Gastrocnemius medialis (tissue), 4 donors: ENCODE measurements at regions of chr7 and their contacts with region 1.

Region 1: DNA sequence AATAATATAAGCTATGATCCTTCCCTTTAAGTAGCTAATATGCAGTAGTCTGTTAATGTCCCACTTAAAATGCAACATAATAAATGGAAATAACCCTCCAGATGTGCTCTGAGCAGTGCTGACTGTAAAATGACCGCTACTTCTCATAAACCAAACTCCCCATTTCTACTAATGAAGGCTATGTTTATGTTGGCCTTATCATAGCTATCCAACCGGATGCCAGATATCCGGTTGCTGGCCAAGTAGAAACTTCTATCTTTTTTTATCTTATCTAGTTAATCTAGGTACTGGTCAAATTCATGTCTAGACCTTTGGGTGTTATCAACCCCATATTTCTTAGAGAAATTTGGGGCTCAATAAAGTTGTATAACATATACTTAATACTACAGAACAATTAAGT is 56.6 kb downstream of the CHRM2 start:
- DNase-seq: no peak
- ATAC-seq: no peak
- H3K4me3 ChIP-seq: no peak overlapping the region
- H3K27ac ChIP-seq: no peak overlapping the region
- H3K4me1 ChIP-seq: no peaks in the 10 kb centered on the region
- H3K27me3 ChIP-seq: no peaks in the 10 kb centered on the region
- CTCF ChIP-seq: no peak
- POLR2A ChIP-seq: no peak

Region 2: DNA sequence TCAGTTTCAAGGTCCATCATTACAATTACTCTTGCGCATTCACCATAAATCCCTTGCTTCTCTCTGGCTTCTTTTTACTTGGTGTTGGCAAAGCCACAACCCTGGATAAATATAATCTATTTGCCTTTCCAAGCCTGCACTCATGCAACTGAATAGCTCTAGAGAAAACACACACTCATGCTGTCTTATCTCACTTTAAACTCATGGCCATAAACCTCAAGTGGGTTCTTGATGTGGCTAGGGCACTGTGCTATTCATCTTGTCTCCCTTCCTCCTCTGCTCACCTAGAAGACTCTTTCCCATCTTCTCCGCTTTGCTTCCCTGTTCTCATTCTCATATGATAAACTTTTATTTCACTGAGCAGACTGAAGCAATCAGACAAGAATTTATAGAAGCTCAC is 782.5 kb before region 1 on chr7:
- in situ Hi-C with region 1: no loop called
- intact Hi-C with region 1: no loop called
- DNase-seq: no peak
- ATAC-seq: no peak
- H3K4me3 ChIP-seq: no peak overlapping the region
- H3K27ac ChIP-seq: no peak overlapping the region
- H3K4me1 ChIP-seq: no peaks in the 10 kb centered on the region
- H3K27me3 ChIP-seq: no peaks in the 10 kb centered on the region
- CTCF ChIP-seq: no peak
- POLR2A ChIP-seq: no peak

Region 3: GRCh38 chr7:136412952-136413351 is 512.1 kb before region 1 on chr7:
- in situ Hi-C with region 1: no loop called
- intact Hi-C with region 1: no loop called
- DNase-seq: no peak
- ATAC-seq: no peak
- H3K4me3 ChIP-seq: no peak overlapping the region
- H3K27ac ChIP-seq: no peak overlapping the region
- H3K4me1 ChIP-seq: no peaks in the 10 kb centered on the region
- H3K27me3 ChIP-seq: no peaks in the 10 kb centered on the region
- CTCF ChIP-seq: no peak
- POLR2A ChIP-seq: no peak

Region 4: GRCh38 chr7:136845899-136846465 is 79.1 kb before region 1 on chr7:
- in situ Hi-C with region 1: loop called in 1 of 4 experiments (anchors 25 kb)
- intact Hi-C with region 1: no loop called
- DNase-seq: no peak
- ATAC-seq: no peak
- H3K4me3 ChIP-seq: no peak overlapping the region
- H3K27ac ChIP-seq: no peak overlapping the region
- H3K4me1 ChIP-seq: no peaks in the 10 kb centered on the region
- H3K27me3 ChIP-seq: no peaks in the 10 kb centered on the region
- CTCF ChIP-seq: no peak
- POLR2A ChIP-seq: no peak